ENCODE measurements at regions of chr20 and their contacts with region 1.

Region 1: GRCh38 chr20:41306061-41306727 is 11.3 kb downstream of the ZHX3 start:
- DNase-seq: peak; percentile 42
- ATAC-seq: peak; percentile 98
- H3K4me3 ChIP-seq: peak overlapping the region; percentile 36; the same call in 1 of the 2 replicates
- H3K27ac ChIP-seq: peak overlapping the region; percentile 71
- H3K4me1 ChIP-seq: peaks cover 30% of the 10 kb centered on the region
- H3K27me3 ChIP-seq: no peaks in the 10 kb centered on the region
- CTCF ChIP-seq: no peak
- EP300 ChIP-seq: peak; percentile 50 to 58; a peak in 2 of 4 replicates
- POLR2A ChIP-seq: no peak
- RAD21 ChIP-seq: no peak

Region 2: GRCh38 chr20:41317536-41318270 is 11.5 kb after region 1 on chr20 and contains the start of gene ZHX3:
- CTCF ChIA-PET with region 1: interaction called, 3 read pairs
- POLR2A ChIA-PET with region 1: interaction called, 10 read pairs
- RAD21 ChIA-PET with region 1: interaction called, 3 read pairs
- SMC1A ChIA-PET with region 1: interaction called, 16 read pairs
- in situ Hi-C with region 1: no loop called
- intact Hi-C with region 1: no loop called
- DNase-seq: peak; percentile 78
- ATAC-seq: peak; percentile 99
- H3K4me3 ChIP-seq: peak within 1 kb of the TSS; percentile 96
- H3K27ac ChIP-seq: peak within 1 kb of the TSS; percentile 61
- H3K4me1 ChIP-seq: peaks cover 3% of the 10 kb centered on the region; the same call in 1 of the 2 replicates
- H3K27me3 ChIP-seq: no peaks in the 10 kb centered on the region
- CTCF ChIP-seq: no peak
- EP300 ChIP-seq: no peak
- POLR2A ChIP-seq: peak; percentile 60; the same call in 1 of the 2 replicates
- RAD21 ChIP-seq: no peak
- polyA plus RNA-seq, gene ZHX3: 1.3 to 1.4 TPM